ENCODE measurements at regions of chr1 and their contacts with region 1.

Region 1: GRCh38 chr1:211632631-211633523 is 42.5 kb downstream of the NEK2 start:
- DNase-seq: peak; percentile 89
- ATAC-seq: peak; percentile 65
- H3K4me3 ChIP-seq: no peak overlapping the region
- H3K27ac ChIP-seq: peak overlapping the region; percentile 59
- H3K4me1 ChIP-seq: peaks cover 17% of the 10 kb centered on the region
- H3K27me3 ChIP-seq: no peaks in the 10 kb centered on the region
- CTCF ChIP-seq: no peak
- POLR2A ChIP-seq: no peak
- RAD21 ChIP-seq: no peak

Region 2: DNA sequence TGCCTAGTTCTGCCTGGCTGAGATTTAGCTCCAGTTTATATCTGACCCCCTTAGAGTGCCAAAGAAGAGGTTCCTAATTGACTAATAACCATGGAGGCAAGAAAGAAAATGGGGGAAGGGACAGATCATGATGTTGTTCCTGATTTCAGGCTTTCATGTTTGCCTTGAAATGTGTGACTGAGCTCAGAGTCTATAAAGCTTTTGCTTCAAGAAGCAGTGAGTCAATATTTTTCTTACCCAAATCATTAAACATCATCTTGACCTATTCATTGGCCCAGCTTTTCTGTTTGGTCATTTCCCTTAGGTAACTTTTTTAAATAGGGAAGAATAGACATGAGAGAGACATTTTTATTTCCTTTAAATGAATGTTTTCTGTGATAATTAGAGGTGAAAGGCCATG is 1248.2 kb before region 1 on chr1:
- CTCF ChIA-PET with region 1: no interaction called
- POLR2A ChIA-PET with region 1: interaction called, 10 read pairs
- dilution Hi-C with region 1: no loop called
- in situ Hi-C with region 1: no loop called
- intact Hi-C with region 1: no loop called
- DNase-seq: peak; percentile 79
- ATAC-seq: peak; percentile 80
- H3K4me3 ChIP-seq: no peak overlapping the region
- H3K27ac ChIP-seq: no peak overlapping the region
- H3K4me1 ChIP-seq: peaks cover 3% of the 10 kb centered on the region
- H3K27me3 ChIP-seq: no peaks in the 10 kb centered on the region
- CTCF ChIP-seq: no peak
- POLR2A ChIP-seq: no peak
- RAD21 ChIP-seq: no peak